ENCODE measurements at regions of chrX and their contacts with region 1.

Region 1: GRCh38 chrX:1657367-1658070 is 42.7 kb downstream of the ASMT start:
- DNase-seq: no peak
- H3K4me3 ChIP-seq: no peak overlapping the region
- H3K27ac ChIP-seq: no peak overlapping the region
- H3K4me1 ChIP-seq: peaks cover 9% of the 10 kb centered on the region
- H3K27me3 ChIP-seq: peaks cover 19% of the 10 kb centered on the region
- CTCF ChIP-seq: no peak

Region 2: DNA sequence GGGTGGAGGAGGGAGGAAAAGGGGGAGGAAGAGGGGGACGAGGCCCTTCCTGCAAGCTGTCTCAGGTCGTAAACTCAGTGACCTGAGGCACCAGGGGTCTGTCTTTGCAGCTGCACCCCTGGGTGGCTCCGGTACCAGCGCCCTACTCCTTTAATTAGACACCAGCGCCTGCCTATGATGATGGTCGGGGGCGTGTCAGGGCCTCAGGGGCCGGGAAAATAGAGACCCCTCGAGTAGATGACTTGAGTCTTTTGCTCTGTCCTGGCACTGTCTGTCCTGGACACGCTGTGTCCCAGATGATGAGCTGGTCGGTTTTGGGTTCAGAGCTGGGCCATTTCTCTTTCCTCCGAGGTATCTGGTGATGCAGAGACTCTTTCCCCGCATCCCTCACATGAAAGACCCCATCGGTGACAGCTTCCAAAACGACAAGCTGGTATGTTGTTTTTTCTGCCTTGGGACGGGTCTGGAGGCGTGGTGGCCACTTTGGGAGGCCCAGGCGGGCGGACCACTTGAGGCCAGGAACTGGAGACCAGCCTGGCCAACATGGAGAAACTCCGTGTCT is 276.8 kb before region 1 on chrX:
- intact Hi-C with region 1: no loop called
- DNase-seq: no peak
- H3K4me3 ChIP-seq: no peak overlapping the region
- H3K27ac ChIP-seq: no peak overlapping the region
- H3K4me1 ChIP-seq: peaks cover 5% of the 10 kb centered on the region
- H3K27me3 ChIP-seq: no peaks in the 10 kb centered on the region
- CTCF ChIP-seq: no peak

Region 3: DNA sequence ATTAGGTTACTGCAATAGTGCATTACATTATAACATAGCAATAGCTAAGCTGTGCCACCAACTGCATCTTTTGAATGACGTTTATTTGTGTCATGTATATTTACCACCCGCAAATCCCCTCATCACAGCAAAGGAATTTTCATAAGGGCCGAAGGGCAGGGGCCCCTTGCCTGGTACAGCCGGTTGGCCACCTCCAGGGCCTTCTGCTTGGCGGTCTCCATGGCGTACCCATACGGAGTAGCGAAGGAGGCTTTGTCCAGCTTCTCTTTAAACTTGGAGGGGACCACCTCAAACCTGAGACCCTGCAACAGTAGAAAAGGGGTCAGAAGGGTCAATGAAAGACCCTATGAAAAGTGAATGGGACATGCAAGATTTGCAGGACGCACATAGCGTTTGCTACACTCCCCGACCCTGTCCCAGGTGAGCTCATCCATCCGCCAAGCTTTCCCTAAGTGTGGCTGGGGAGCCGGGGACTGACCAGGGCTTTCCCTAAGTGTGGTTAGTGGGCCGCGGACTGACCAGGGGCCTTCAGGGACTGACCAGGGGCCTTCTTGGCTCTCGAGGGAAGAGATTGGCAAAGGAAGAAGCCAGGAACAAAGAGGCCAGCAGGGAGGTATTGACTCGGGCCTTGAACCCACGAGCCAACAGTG is 215.4 kb before region 1 on chrX:
- intact Hi-C with region 1: no loop called
- DNase-seq: no peak
- H3K4me3 ChIP-seq: no peak overlapping the region
- H3K27ac ChIP-seq: no peak overlapping the region
- H3K4me1 ChIP-seq: no peaks in the 10 kb centered on the region
- H3K27me3 ChIP-seq: no peaks in the 10 kb centered on the region
- CTCF ChIP-seq: no peak

Region 4: DNA sequence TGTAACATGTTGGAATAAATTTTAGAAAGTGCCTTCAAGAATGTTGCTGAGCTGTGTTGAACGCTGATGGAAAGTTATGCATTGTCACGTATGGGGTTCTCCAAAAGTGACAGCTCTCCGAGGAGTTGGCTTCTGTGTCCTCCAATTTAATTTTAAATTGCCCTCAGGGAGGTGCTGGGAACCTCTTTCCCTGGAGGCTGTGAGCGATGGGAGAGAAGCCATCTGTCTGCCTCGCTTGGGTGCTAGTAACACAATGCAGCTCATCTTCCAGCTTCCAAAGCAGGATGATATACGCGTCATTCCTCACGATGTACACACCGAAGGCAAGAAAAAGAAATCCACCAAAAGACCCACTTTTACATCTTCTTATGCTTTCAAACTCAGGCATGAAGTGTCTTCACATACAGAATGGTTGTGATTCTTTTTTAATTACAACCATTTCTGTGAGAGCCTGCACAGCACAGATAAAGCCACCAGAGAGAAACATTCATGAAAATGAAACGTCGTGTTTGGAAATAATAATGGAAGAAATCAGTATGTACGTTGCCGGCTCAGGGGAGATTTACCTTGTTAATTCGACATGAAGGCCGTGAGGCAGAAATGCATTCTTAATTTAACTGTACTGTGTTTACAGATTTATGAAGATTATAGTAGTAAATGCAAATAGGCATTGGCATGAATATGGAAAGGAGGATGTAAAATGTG is 176.3 kb after region 1 on chrX:
- intact Hi-C with region 1: no loop called
- DNase-seq: no peak
- H3K4me3 ChIP-seq: no peak overlapping the region
- H3K27ac ChIP-seq: no peak overlapping the region
- H3K4me1 ChIP-seq: no peaks in the 10 kb centered on the region
- H3K27me3 ChIP-seq: peaks cover 20% of the 10 kb centered on the region
- CTCF ChIP-seq: no peak

Region 5: GRCh38 chrX:2584251-2585157 is 927.0 kb after region 1 on chrX:
- intact Hi-C with region 1: loop called (anchors 10 kb)
- DNase-seq: no peak
- H3K4me3 ChIP-seq: peak overlapping the region; percentile 33
- H3K27ac ChIP-seq: no peak overlapping the region
- H3K4me1 ChIP-seq: peaks cover 20% of the 10 kb centered on the region
- H3K27me3 ChIP-seq: peaks cover 60% of the 10 kb centered on the region
- CTCF ChIP-seq: no peak